ENCODE measurements at regions of chr2 and their contacts with region 1.

Region 1: GRCh38 chr2:61764035-61764800 is 89.6 kb downstream of the FAM161A start:
- DNase-seq: peak; percentile 96
- H3K4me3 Mint-ChIP-seq: peak overlapping the region; percentile 89
- H3K27ac Mint-ChIP-seq: peak overlapping the region; percentile 94
- H3K4me1 Mint-ChIP-seq: peaks cover 15% of the 10 kb centered on the region
- H3K27me3 Mint-ChIP-seq: no peaks in the 10 kb centered on the region

Region 2: DNA sequence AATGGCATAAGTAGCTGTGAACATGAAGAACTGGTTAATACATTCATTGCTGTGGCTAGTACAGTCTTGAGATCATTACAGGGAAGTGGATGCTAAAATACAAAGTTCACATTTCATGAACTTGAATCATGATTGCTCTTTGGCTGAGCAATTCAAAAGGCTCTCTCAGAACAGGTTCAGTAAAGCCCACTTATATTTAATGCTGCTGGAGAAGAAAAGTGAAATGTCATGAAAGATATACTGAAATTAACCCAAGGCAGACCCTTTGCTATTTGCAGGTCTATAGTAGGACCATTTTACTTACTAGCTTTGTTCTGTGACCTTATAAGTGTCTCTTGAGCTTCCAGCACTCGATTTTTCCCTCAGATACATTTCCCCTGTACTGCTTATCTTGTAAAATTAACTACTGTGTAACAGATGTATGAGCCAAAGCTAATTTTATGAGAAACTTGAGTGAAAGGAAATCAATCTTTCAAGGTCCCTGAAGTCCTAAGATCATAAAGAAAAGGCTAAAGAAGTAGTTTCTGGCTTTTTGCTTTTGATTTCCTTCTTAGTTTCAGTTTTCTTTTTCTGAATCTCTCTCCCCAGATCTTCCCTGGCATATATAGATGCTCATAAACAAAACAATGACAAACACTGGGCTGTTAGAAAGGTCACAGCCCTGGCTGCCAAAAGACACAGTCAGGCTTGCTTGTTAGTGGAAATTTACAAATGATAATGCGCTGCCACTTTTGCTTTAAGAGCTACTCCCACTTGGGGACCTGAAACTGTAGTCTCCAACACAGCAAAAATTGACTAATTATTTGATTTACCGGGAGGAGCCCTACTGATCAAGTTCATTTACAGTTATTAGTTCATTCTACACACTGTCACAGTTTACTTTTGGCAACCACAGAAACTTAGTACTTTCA is 93.4 kb before region 1 on chr2:
- intact Hi-C with region 1: loop called (anchors 5 kb)
- DNase-seq: peak; percentile 12
- H3K4me3 Mint-ChIP-seq: peak overlapping the region; percentile 61
- H3K27ac Mint-ChIP-seq: peak overlapping the region; percentile 89
- H3K4me1 Mint-ChIP-seq: peaks cover 19% of the 10 kb centered on the region
- H3K27me3 Mint-ChIP-seq: no peaks in the 10 kb centered on the region

Region 3: GRCh38 chr2:61694312-61695274 is 69.6 kb before region 1 on chr2:
- intact Hi-C with region 1: loop called (anchors 1 kb)
- DNase-seq: peak; percentile 79
- H3K4me3 Mint-ChIP-seq: peak overlapping the region; percentile 93
- H3K27ac Mint-ChIP-seq: peak overlapping the region; percentile 81
- H3K4me1 Mint-ChIP-seq: peaks cover 12% of the 10 kb centered on the region
- H3K27me3 Mint-ChIP-seq: no peaks in the 10 kb centered on the region

Region 4: DNA sequence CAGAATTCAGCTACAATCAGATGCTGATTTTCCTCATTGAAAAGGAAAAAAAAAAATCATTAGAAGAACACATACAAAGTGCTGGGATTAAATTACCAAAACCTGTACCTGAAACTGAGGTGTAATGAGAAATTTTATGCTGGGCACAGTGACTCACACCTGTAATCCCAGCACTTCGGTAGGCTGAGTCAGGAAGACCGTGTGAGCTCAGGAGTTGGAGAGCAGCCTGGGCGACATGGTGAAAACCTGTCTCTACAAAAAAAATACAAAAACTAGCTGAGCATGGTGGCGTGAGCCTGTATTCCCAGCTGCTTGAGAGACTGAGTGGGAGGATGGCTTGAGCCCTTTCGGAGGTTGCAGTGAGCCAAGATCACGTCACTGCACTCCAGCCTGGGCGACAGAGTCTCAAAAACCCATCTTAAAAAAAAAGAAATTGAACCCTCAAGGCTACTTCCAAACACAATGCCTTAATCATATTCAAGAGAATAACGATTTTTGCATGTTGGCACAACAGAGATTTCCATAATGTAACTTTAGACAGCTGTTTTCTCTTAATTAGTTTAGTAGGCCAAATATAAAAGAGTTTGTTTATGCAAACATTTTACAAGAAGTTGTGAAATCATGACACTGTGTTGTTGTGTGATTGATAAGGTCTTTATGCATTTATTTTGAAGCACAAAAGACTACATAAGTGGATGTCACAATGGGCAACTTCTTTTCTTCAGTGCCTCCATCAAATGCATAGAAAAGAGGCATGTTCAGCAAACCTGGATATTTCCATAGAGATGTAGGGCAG is 25.8 kb after region 1 on chr2:
- intact Hi-C with region 1: no loop called
- DNase-seq: no peak
- H3K4me3 Mint-ChIP-seq: no peak overlapping the region
- H3K27ac Mint-ChIP-seq: no peak overlapping the region
- H3K4me1 Mint-ChIP-seq: peaks cover 5% of the 10 kb centered on the region
- H3K27me3 Mint-ChIP-seq: peaks cover 7% of the 10 kb centered on the region

Region 5: GRCh38 chr2:61854474-61855182 is 90.4 kb after region 1 on chr2:
- intact Hi-C with region 1: loop called (anchors 1 kb)
- DNase-seq: peak; percentile 87
- H3K4me3 Mint-ChIP-seq: peak overlapping the region; percentile 89
- H3K27ac Mint-ChIP-seq: peak overlapping the region; percentile 88
- H3K4me1 Mint-ChIP-seq: peaks cover 16% of the 10 kb centered on the region
- H3K27me3 Mint-ChIP-seq: no peaks in the 10 kb centered on the region

Region 6: GRCh38 chr2:61888267-61889055 is 124.2 kb after region 1 on chr2 and contains the start of gene CCT4:
- intact Hi-C with region 1: loop called (anchors 1 kb)
- DNase-seq: peak; percentile 88
- H3K4me3 Mint-ChIP-seq: peak within 1 kb of the TSS; percentile 96
- H3K27ac Mint-ChIP-seq: peak within 1 kb of the TSS; percentile 99
- H3K4me1 Mint-ChIP-seq: peaks cover 20% of the 10 kb centered on the region
- H3K27me3 Mint-ChIP-seq: no peaks in the 10 kb centered on the region
- total RNA-seq, gene CCT4: 360 and 367 TPM in 2 replicates

Region 7: GRCh38 chr2:61905372-61906185 is 141.4 kb after region 1 on chr2 and contains the start of gene COMMD1:
- intact Hi-C with region 1: loop called (anchors 5 kb)
- DNase-seq: peak; percentile 73
- H3K4me3 Mint-ChIP-seq: peak within 1 kb of the TSS; percentile 98
- H3K27ac Mint-ChIP-seq: peak within 1 kb of the TSS; percentile 76
- H3K4me1 Mint-ChIP-seq: peaks cover 11% of the 10 kb centered on the region
- H3K27me3 Mint-ChIP-seq: no peaks in the 10 kb centered on the region
- total RNA-seq, gene COMMD1: 27.5 and 29.1 TPM in 2 replicates

Region 8: GRCh38 chr2:62195421-62196277 is 431.4 kb after region 1 on chr2 and contains the start of gene B3GNT2:
- intact Hi-C with region 1: loop called (anchors 10 kb)
- DNase-seq: peak; percentile 74
- H3K4me3 Mint-ChIP-seq: peak within 1 kb of the TSS; percentile 90
- H3K27ac Mint-ChIP-seq: peak within 1 kb of the TSS; percentile 91
- H3K4me1 Mint-ChIP-seq: peaks cover 32% of the 10 kb centered on the region
- H3K27me3 Mint-ChIP-seq: peaks cover 11% of the 10 kb centered on the region
- total RNA-seq, gene B3GNT2: 29.0 and 29.3 TPM in 2 replicates

Region 9: GRCh38 chr2:62287899-62288880 is 524.0 kb after region 1 on chr2:
- intact Hi-C with region 1: no loop called
- DNase-seq: no peak
- H3K4me3 Mint-ChIP-seq: no peak overlapping the region
- H3K27ac Mint-ChIP-seq: no peak overlapping the region
- H3K4me1 Mint-ChIP-seq: peaks cover 4% of the 10 kb centered on the region
- H3K27me3 Mint-ChIP-seq: no peaks in the 10 kb centered on the region

Measured in activated T-helper 2 cell treated with anti-CD3 and anti-CD28 coated beads, Interferon-gamma antibody, Interleukin-2, Interleukin-4, amounts not matched to agents 10 μg/mL and 5 μg/mL and 100 μg/mL, durations not matched to agents 14 hours and 24 hours and 36 hours (primary cell).